Posterior vena cava (tissue), 2 donors: ENCODE measurements at regions of chr5 and their contacts with region 1.

Region 1: DNA sequence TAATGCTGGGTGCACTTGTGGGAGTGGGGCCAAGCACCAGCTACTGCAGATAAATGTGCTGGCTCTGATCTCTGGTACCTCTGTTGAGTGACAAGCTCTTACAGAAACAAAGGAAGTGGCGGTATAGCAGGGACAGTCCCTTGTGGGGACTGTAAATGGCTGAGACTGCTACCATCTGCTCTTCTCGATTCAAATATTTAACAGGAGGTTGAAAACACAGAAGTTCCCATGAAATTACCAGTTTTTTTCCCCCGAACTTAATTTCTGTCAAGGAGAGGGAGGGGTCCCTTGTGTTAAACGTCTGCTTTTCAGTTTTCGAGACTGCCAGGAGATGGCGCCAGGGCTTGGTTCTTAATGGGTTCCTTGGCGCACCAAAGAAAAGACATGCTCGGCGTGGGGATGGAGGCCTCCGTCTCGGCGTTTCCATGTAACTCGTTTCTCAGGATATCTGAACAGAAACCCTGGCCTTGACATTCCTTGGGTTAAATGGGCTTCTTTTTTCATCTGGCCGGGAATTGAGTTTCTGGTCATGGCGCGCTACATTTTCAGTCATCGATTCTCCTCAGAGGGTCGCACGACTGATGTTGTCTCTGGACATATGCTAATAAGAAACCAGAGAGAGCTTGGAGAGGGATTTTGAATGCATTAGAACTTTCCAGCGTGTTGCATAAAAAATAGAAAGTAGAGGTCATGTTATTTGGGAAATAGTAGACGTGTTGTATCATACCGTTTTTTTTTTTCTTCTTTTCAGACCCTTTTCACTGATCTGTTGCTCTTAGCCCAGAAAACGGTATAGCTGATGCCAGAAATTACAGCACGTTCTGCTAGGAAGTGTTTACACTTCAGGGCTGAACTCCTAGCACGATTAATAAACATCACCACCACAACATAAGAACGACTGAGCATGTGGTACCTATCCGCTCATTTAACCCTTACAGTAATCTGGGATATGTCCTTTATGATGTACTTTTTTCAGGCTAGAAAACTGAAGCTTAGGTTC is 64.0 kb downstream of the CARTPT start:
- DNase-seq: peak; percentile 94

Region 2: DNA sequence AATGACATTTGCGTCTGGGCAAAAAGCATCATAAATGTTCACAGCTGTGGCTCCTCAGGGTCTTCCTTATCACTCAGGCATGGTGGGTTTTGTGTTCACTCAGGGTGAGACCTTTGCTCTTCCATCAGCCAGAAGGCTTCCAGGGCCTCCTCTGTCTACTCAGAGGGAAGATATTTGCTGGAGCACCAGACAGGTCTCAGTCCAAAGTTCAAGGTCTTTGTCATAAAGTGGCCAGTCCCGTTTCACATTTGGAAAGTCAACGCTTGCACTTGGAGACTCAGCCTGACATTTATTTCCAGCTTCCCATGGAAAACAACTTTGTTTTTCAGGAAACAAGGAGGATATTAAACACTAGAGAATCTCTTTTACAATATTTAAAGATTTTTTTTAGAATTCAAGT is 76.2 kb before region 1 on chr5:
- intact Hi-C with region 1: no loop called
- DNase-seq: no peak

Region 3: GRCh38 chr5:72018146-72018803 is 235.2 kb after region 1 on chr5:
- intact Hi-C with region 1: loop called in 1 of 2 experiments (anchors 10 kb)
- DNase-seq: no peak

Region 4: GRCh38 chr5:72108202-72109061 is 325.4 kb after region 1 on chr5:
- intact Hi-C with region 1: loop called in 1 of 2 experiments (anchors 10 kb)
- DNase-seq: peak; percentile 95

Region 5: DNA sequence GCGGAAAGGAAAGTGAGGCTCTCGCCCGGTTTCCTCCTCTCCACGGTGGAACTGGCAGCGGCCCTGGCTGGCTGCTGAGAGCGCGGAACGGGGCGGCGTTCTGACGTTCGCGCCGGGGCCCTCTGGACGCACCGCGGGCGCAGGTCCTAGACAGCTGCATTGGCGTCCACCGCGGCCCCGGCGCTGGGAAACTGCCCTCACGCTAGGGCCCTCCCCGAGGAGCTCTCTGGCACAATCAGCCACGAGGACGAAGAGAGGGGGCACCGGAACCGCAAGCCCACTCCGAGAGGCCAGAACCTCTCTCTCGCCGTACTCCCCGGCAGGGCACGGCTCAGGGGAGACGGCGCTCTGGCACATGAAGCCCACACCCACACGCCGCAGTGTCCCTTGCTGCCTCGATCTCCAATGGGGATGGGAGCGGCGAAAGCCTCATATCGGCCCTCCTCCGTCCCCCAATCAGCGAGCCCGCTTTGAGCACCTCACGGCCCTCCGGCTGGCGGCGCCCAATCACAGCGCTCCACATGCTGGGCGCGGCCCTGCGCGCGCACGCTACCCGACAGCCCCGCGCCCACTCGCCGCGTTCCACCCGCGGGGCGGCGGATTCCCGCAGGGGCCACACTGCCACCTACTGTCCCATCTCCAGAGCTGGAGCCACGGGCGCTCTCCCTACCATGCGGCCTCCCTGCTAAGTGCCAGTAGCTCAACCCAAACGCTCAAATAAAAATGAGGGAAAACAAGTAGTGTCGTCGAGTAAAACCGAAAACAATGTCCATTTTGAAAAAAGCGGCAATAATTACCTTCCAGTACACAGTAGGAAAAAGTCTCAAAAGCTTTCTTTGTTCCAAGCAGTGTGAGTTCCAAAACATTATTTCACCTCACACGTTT is 525.1 kb after region 1 on chr5:
- intact Hi-C with region 1: loop called (anchors 2 to 10 kb)
- DNase-seq: peak; percentile 99